Right ventricle myocardium inferior (tissue), 1 donor: ENCODE measurements at regions of chr4 and their contacts with region 1.

Region 1: GRCh38 chr4:54322818-54323417 is 93.8 kb downstream of the PDGFRA start:
- DNase-seq: no peak
- ATAC-seq: peak; percentile 54

Region 2: GRCh38 chr4:54440394-54441136 is 117.6 kb after region 1 on chr4:
- intact Hi-C with region 1: loop called (anchors 2 kb)
- DNase-seq: no peak
- ATAC-seq: peak; percentile 58

Region 3: DNA sequence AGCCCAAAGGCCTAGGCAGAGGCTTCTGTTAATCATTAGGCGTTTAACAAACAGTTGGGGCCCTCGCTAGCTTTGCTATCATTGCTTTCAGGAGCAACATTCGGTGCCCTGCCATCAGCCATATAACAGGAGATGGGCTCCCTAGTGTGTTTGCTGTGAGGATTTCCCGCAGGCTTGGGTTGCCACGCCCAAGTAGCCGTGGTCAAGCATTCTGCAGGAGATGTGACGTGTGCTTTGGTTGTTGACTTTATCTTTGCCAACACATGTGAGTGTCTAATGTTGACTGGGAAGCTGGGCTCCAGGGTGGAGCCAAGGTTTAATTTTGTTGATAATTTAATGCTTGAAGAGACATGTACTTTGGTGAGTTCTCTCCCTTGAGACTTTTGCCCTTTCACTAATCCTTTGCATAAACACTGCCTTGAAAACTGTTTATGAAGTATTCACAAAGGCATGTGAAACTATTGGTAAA is 150.2 kb after region 1 on chr4:
- intact Hi-C with region 1: no loop called
- DNase-seq: no peak
- ATAC-seq: no peak

Region 4: GRCh38 chr4:54840992-54841768 is 518.3 kb after region 1 on chr4:
- intact Hi-C with region 1: loop called (anchors 2 kb)
- DNase-seq: no peak
- ATAC-seq: peak; percentile 56

Region 5: DNA sequence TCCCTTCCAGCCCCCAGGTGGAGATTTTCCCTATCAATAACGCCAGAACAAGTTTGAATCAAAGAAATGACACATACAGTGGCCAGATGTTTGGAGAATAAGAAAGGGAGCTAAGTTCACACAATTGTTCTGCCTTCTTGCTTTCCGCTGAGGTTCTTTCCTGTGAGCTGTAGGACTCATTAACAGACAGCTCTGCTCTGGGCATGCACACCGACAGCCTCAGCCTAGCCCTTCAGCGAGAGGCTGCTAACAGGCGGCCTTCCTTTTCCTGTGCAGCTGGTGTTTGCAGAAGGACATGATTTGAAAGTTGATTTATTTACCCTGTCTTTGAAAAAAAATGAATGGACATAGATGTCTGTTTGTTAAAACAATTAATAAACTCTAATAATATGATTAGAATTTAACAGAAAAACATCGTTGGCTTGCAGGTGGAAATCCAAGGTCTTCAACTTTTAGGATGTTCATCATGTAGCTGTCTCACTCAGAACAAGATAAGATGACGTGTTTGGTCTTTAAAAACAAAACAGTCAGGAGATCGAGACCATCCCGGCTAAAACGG is 619.2 kb after region 1 on chr4:
- intact Hi-C with region 1: loop called (anchors 5 kb)
- DNase-seq: no peak
- ATAC-seq: no peak

Region 6: DNA sequence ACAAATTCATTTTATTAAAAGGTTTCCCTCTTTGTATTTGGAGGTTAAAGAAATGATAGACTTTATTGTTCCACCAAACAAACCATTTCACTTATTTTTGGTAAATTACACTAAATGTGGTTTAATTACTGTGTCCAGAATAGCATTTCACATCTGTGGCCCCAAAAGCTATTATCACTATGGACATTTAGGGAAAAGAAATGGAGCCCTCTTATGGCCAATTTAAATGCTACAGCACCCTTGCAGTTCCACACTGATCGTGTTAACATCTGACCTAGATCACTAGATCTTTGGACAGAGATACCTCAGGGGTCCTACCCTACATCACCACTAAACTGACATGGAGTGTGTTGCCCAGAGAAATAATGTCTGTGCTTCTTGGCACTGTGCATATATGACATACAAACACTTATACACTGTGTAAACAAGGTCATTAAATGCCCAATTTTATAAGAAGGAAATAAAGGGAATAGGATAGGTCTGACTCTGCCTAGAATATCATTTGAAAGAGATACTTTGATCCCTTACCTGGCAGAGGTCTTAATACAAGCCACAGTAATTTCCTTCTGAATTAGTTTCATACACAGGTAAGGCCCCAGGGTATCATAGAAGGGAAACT is 638.5 kb after region 1 on chr4:
- intact Hi-C with region 1: loop called (anchors 5 kb)
- DNase-seq: no peak
- ATAC-seq: no peak

Region 7: DNA sequence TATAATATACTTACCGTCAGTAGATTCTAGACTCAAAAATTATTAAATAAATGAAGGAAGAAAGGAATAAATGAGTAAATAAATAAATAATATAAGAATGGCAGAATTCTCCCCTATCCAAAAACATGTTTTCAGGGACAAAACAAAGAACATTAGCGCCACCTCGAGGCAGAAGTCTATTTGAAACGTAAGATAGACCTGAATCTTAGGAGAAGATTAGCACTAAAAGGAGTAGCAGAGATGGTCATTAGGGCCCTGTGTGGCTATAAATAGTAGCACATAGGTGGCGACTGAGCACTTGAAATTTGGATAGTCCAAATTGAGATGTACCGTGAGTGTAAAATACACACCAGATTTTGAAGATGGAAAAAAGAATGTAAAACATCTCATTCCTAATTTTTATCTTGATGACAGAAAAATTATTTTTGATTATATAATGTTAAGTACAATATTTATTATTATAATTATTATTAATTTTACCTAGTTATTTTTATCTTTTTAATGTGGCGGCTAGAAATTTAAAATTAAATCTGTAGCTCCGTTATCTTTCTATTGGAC is 998.9 kb after region 1 on chr4:
- intact Hi-C with region 1: loop called (anchors 5 kb)
- DNase-seq: no peak
- ATAC-seq: no peak